Activated CD8-positive, alpha-beta T cell treated with anti-CD3 and anti-CD28 coated beads for 36 hours (primary cell): ENCODE measurements at regions of chr1 and their contacts with region 1.

Region 1: DNA sequence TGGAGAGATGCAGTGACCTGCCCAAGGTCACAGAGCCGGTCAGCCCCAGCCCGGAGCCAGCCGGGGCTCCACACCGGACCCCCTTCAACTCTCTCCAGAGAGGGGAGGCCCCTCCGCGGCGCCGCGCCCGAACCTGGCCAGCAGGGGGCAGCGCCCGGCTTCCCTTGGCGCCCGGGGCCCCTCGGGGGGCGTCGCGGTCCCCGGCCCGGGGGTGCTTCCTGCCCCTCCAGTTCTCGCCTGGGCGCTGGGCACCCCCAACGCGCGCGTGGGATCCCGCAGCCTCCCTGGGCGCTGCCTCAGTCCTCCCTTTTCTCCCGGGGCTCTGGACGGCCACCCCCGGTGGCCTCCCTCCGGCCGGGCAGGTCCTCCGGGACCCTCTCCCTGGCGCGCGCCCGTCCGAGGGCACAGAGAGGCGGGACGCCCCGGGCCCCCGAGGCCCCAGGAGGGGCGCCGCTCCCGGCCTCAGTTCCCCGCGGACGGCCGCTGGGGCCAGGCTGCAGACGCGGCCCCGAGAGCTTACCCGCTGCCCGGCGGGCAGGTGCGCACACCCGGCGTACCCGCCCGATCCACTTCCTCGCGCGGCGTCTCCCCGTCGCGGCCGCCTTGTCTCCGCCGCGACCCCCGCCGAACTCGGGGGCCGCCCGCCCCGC is 406 bp downstream of the HTR1D start:
- DNase-seq: peak; percentile 49
- ATAC-seq: peak; percentile 88
- H3K4me3 Mint-ChIP-seq: no peak overlapping the region
- H3K27ac Mint-ChIP-seq: no peak overlapping the region
- H3K4me1 Mint-ChIP-seq: peaks cover 6% of the 10 kb centered on the region
- H3K27me3 Mint-ChIP-seq: peaks cover 57% of the 10 kb centered on the region
- CTCF ChIP-seq: peak; percentile 96

Region 2: GRCh38 chr1:23200885-23201284 is 16.0 kb before region 1 on chr1:
- CTCF ChIA-PET with region 1: no interaction called
- POLR2A ChIA-PET with region 1: no interaction called
- intact Hi-C with region 1: no loop called
- DNase-seq: no peak
- ATAC-seq: no peak
- H3K4me3 Mint-ChIP-seq: no peak overlapping the region
- H3K27ac Mint-ChIP-seq: no peak overlapping the region
- H3K4me1 Mint-ChIP-seq: no peaks in the 10 kb centered on the region
- H3K27me3 Mint-ChIP-seq: peaks cover 3% of the 10 kb centered on the region
- CTCF ChIP-seq: no peak

Region 3: GRCh38 chr1:23249787-23250454 is 33.0 kb after region 1 on chr1:
- CTCF ChIA-PET with region 1: interaction called, 10 read pairs
- POLR2A ChIA-PET with region 1: no interaction called
- intact Hi-C with region 1: no loop called
- DNase-seq: no peak
- ATAC-seq: no peak
- H3K4me3 Mint-ChIP-seq: no peak overlapping the region
- H3K27ac Mint-ChIP-seq: no peak overlapping the region
- H3K4me1 Mint-ChIP-seq: no peaks in the 10 kb centered on the region
- H3K27me3 Mint-ChIP-seq: no peaks in the 10 kb centered on the region
- CTCF ChIP-seq: no peak

Region 4: DNA sequence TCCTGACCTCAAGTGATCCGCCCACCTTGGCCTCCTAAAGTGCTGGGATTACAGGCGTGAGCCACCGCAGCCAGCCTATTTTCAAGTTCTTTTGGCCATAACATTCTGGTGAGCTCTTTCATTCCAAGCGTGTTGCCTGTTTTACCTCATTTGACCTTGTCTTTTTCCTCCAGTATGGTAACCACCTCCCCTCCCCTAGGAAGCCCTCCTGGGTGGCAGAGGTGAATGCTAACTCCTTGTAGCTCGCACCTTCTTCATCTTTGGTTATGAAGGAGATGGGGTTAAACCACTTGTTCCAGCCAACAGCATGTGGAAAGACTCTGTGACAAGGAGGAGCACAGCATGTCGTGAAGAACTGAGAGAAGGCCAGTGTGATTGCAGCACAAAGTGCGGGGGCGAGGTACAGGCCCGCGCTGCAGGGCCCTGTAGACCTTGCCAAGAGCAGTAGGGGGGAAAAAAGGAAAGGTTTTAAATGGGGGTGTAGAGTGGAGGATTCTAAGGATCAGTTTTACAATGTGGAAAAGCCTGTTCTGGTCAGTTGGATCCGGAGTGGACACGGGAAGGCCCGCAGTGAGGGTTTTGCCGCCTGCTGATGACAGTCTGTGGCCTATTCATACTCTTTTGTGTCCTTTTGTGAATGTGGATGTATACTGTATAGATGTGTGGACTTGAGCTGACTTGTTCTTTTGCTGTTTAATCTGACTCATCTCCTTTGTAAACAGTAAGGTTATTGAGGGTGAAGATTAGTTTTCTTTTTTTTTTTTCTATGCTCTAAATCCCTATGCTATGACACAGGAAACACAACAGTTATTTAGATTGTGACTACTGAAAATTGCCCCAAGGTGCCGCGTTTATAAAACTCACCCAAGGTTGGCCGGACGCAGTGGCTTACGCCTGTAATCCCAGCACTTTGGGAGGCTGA is 160.3 kb after region 1 on chr1:
- CTCF ChIA-PET with region 1: no interaction called
- POLR2A ChIA-PET with region 1: no interaction called
- intact Hi-C with region 1: no loop called
- DNase-seq: no peak
- ATAC-seq: no peak
- H3K4me3 Mint-ChIP-seq: no peak overlapping the region
- H3K27ac Mint-ChIP-seq: no peak overlapping the region
- H3K4me1 Mint-ChIP-seq: no peaks in the 10 kb centered on the region
- H3K27me3 Mint-ChIP-seq: no peaks in the 10 kb centered on the region
- CTCF ChIP-seq: no peak